ENCODE measurements at regions of chr2 and their contacts with region 1.

Region 1: DNA sequence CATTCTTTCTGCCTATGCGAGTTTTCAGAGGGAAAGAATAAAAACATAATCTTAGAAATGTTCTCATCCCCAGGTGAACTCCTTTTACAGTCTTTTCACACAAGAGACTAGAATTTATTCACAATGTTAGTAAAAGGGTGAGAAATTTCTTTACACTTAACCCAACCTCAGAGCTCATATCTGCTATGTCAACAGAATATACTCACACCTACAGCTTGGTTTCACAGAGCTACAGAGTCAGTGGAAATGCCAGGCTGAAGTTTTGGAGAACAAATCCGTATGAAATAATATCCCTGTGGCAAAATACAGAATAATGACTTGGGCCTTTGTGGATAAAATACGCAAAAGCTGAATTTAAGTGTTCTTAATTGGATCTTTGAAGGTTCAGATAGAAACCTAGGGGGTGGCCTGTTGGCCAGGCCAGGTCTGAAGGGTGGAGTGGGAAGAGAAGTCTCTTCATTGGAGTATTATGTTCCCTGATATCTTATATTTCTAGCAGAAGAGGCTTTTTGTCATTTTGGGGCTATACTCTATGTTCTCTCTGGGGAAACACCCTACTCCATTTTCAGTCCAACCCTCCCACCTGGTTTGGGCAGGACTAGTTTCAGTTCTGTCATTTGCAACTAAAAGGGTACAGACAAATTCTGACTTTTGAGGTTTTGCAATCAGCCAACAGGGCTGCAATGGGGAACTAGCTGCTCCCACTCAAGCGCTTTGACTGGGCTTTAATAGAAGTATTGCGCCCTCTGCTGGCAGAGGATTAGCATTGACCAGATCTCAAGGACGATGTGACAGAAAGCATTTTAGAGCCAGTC is 25.7 kb downstream of the FBXO48 start:
- DNase-seq: peak; percentile 78
- CTCF ChIP-seq: peak; percentile 82

Region 2: GRCh38 chr2:68362069-68362468 is 79.3 kb before region 1 on chr2:
- CTCF ChIA-PET with region 1: interaction called, 30 read pairs
- POLR2A ChIA-PET with region 1: no interaction called
- DNase-seq: peak; percentile 73
- CTCF ChIP-seq: peak; percentile 76

Region 3: DNA sequence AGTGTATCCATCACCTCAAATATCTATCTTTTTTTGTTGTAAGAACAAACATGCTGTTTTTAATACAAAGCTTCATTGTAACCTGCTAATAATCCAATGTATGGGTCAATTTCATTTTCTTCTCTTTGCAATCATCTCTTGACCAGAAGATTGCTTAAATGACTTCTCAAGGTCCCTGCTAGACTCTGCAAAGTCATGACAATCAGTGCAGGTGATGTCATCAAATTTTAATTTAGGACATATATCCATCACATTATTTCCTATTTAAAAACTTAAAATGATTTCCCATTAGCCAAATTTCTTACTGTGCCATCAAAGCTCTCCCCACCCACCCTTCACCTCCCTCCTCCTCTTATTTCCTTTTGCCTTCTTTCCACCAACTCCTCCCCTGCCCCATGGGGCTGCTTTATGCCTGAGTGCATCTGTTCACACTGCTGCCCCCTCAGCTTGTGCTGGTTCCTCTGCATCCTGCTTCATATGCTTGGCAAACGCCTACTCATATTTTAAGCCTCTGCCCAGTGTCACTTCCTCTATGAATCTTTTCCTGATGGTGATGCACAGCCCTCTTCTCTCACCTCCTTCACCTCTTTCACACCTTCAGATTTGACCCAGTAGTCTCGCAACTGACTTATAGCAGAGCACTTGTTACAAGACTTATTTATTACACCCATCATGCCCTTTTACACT is 56.0 kb before region 1 on chr2:
- CTCF ChIA-PET with region 1: interaction called, 27 read pairs
- POLR2A ChIA-PET with region 1: interaction called, 13 read pairs
- DNase-seq: peak; percentile 31
- CTCF ChIP-seq: no peak

Region 4: DNA sequence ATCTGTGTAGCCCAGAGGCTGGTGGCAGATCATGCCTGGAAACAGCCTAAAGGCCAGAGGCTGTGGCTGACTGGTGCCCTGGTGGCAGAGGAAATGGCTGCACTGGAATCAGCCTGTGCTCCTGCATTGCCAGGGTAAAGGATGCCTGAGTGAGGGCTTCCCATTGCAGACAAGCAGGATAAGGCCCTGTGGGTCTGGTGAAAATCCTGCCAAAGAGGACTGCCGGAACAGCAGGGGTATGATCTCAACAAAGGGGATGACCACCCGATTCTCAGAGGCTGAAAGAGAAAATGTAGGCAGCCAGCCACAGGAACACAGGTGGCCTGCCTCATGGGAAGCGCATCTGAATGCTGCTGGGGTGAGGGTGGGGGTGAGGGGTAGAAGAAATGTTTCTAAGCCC is 22.5 kb before region 1 on chr2:
- CTCF ChIA-PET with region 1: interaction called, 137 read pairs
- POLR2A ChIA-PET with region 1: interaction called, 4 read pairs
- DNase-seq: no peak
- CTCF ChIP-seq: no peak

Region 5: DNA sequence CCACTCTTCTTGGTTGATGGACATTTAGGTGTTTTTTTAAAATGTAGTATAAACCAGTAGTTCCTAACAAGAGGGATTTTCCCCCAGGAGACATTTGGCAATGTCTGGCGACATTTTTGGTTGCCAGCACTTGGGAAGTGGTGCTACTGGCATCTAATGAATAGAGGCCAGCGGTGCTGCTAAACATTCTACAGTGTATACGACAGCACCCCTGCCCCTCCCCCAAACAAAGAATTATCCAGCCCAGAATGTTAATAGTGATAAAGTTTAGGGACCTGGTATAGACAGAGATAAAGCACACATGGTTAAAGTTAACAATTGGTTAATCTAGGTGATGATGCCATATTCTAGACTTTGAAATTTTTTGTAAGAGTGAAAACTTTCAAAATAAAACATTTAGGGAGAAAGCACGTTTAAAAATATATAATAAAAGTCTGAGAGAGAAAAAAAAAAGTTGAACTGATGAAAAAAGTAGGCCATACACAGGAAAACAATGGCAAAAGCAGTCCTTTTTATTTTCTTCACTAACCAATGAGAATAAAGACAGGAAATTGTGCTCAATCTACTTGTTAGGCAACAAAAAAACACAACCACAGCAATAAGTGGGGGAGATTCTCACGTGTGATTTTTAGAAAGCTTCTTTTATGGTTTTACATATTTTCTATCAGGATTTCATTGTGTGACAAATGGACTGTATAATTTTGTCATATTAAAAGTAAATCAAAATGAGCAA is 10.9 kb after region 1 on chr2:
- CTCF ChIA-PET with region 1: interaction called, 18 read pairs
- POLR2A ChIA-PET with region 1: no interaction called
- DNase-seq: no peak
- CTCF ChIP-seq: no peak

Region 6: DNA sequence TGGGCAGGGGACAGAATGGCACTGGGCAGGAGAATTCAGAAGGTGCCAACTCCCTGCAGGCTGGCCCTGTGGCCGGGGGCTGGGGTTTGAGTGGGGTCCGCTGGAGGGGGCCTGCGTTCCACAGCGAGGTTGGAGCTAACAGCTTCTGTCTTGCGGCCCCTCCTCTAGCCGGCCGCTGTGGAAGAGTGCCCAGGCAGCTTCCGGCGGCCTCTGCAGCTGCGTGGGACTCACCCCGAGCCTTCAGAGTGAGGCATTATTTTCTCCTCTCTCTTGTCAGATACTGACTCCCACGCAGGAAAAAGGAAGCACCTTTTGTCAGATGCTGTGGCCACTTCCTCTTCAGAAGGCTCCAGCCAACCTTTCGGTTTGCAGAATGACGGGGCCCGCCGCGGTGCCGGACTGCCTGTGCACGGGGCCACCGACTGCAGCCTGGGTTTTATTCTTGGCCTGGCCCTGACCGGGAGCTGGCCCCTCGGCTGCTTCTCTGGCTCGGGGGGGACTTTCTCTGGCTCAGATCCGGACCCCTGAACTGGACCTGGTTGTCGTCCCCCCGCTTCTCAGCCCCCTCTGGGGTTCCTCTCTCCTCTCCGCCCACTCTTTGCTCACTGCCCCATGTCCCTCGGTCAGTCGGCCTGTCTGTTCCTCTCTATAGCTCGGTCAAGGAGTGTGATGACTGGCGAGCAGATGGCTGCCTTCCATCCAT is 333.3 kb after region 1 on chr2:
- CTCF ChIA-PET with region 1: no interaction called
- POLR2A ChIA-PET with region 1: no interaction called
- DNase-seq: peak; percentile 89
- CTCF ChIP-seq: no peak